PC-9 (cell line): ENCODE measurements at regions of chr6 and their contacts with region 1.

Region 1: GRCh38 chr6:14711056-14711703 is 534.7 kb upstream of the JARID2 start:
- DNase-seq: peak; percentile 72 to 82
- H3K4me3 ChIP-seq: no peak overlapping the region
- H3K27ac ChIP-seq: peak overlapping the region; percentile 91
- H3K4me1 ChIP-seq: peaks cover 50% of the 10 kb centered on the region
- H3K27me3 ChIP-seq: no peaks in the 10 kb centered on the region
- CTCF ChIP-seq: peak; percentile 66

Region 2: GRCh38 chr6:14726816-14727493 is 15.8 kb after region 1 on chr6:
- CTCF ChIA-PET with region 1: interaction called, 20 read pairs
- POLR2A ChIA-PET with region 1: no interaction called
- intact Hi-C with region 1: no loop called
- DNase-seq: no peak
- H3K4me3 ChIP-seq: no peak overlapping the region
- H3K27ac ChIP-seq: no peak overlapping the region
- H3K4me1 ChIP-seq: peaks cover 20% of the 10 kb centered on the region
- H3K27me3 ChIP-seq: no peaks in the 10 kb centered on the region
- CTCF ChIP-seq: no peak

Region 3: DNA sequence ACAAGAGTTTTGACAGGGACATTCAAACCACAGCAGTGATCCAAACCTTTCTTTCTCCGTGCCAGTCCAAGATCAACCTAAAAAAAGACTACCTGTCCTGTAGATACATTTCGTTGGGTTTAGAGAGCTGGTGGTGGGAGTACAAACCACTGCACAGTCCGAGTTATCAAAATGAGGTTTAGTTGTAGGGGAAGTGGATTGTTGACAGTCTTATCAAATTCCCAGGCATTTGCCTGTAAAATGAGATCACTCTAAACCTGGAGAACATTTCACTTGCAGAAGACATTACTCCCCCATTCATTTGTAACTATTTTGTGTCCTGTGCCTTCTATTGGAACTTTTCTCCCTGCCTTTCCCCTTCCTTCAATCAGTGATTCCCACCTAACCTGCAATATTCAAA is 65.1 kb after region 1 on chr6:
- CTCF ChIA-PET with region 1: no interaction called
- POLR2A ChIA-PET with region 1: no interaction called
- intact Hi-C with region 1: loop called (anchors 2 kb)
- DNase-seq: peak in 1 of 2 experiments; percentile 9
- H3K4me3 ChIP-seq: no peak overlapping the region
- H3K27ac ChIP-seq: no peak overlapping the region
- H3K4me1 ChIP-seq: 0 out of 2 replicates have a peak, but pooled peaks cover 3% of the 10 kb centered on the region
- H3K27me3 ChIP-seq: no peaks in the 10 kb centered on the region
- CTCF ChIP-seq: no peak